ENCODE measurements at regions of chr16 and their contacts with region 1.

Region 1: DNA sequence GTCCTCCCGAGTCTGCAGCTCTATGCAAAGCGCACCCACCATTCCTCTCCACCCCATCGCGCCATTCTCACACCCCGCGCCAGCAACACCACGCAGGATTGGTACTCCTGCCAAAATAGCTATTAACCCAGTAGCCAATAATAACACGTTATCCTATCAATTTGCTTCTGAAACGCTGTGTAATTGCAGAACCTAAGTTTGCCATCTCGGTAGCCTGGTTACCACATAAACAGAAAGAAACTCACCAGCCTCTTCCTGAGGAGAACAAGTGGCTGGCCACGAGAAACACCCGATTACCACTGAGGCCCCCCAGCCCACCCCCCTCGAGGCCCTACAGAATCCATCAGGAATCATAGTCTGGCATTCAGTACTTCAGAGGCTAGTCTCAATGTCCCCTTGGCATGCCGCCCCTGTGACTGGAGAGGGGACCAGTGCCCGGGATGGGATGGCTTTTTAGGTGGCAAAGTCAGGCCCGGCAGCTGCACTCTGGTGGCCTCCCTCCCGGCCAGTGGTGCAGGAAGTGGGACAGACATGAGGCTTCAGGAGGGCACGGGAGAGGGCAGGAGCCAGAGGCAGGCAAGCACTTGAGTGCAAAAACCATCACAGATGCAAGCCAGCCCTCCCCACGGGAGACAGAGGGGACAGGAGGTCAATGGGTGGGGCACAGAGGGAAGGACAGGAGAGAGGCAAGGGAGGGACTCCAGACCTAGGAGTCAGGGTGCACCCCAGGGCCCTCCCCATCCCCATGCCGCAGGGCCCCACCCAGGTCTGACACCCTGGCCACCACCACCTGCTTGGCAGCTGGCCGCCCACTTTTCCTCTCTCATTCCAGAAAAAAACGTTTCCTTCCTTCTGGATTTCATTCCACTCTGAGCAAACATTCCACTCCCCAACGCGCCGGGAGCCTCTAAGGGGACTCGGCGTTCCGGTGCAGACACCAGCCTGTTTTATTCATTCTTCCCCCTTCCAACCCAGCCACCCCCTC is 192.5 kb downstream of the ZNF423 start:
- DNase-seq: peak; percentile 63
- H3K4me3 ChIP-seq: peak overlapping the region in 1 of 2 experiments; percentile 52; a peak in 2 of 4 replicates
- H3K27ac ChIP-seq: peak overlapping the region in 1 of 2 experiments; percentile 99; a peak in 3 of 4 replicates
- H3K4me1 ChIP-seq: peaks cover 0 to 73% of the 10 kb centered on the region in 2 experiments; a peak in 2 of 4 replicates
- H3K27me3 ChIP-seq: no peaks in the 10 kb centered on the region
- CTCF ChIP-seq: no peak
- EP300 ChIP-seq: no peak
- RAD21 ChIP-seq: no peak; the same call in 1 of the 2 replicates

Region 2: DNA sequence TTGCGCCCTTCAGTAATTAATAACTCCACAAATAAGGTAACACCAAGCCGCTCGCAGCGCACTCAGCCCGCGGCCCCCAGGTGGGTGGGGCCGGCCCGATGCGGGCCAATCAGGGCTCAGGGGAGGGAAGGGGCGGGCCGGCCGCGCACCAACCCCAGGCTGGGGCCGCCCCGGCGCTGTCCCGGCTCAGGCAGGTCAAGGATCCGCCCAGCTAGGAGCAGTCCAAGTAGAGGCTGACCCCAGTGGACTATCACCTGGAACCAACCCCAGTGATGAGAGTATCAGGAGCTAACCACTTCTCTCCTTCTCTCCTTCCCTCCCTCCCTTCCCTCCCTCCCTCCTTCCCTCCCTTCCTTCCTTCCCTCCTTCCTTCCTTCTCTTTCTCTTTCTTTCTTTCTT is 178.9 kb before region 1 on chr16:
- CTCF ChIA-PET with region 1: no interaction called
- POLR2A ChIA-PET with region 1: no interaction called
- DNase-seq: peak; percentile 95
- H3K4me3 ChIP-seq: no peak overlapping the region; a peak in 1 of 4 replicates
- H3K27ac ChIP-seq: no peak overlapping the region
- H3K4me1 ChIP-seq: peaks cover 0 to 3% of the 10 kb centered on the region in 2 experiments; a peak in 1 of 4 replicates
- H3K27me3 ChIP-seq: no peaks in the 10 kb centered on the region
- CTCF ChIP-seq: no peak
- EP300 ChIP-seq: no peak
- RAD21 ChIP-seq: no peak

Region 3: GRCh38 chr16:49639739-49640431 is 23.5 kb before region 1 on chr16:
- CTCF ChIA-PET with region 1: interaction called, 4 read pairs
- POLR2A ChIA-PET with region 1: interaction called, 10 read pairs
- DNase-seq: peak; percentile 81
- H3K4me3 ChIP-seq: no peak overlapping the region; a peak in 1 of 4 replicates
- H3K27ac ChIP-seq: peak overlapping the region; percentile 66 to 85
- H3K4me1 ChIP-seq: peaks cover 29 to 81% of the 10 kb centered on the region in 2 experiments
- H3K27me3 ChIP-seq: no peaks in the 10 kb centered on the region
- CTCF ChIP-seq: no peak
- EP300 ChIP-seq: peak in 1 of 2 experiments; percentile 69; a peak in 2 of 4 replicates
- RAD21 ChIP-seq: peak; percentile 11; the same call in 1 of the 2 replicates

Region 4: GRCh38 chr16:49698931-49699840 is 35.8 kb after region 1 on chr16:
- CTCF ChIA-PET with region 1: interaction called, 5 read pairs
- POLR2A ChIA-PET with region 1: interaction called, 10 read pairs
- DNase-seq: no peak
- H3K4me3 ChIP-seq: no peak overlapping the region
- H3K27ac ChIP-seq: peak overlapping the region; percentile 13 to 97; a peak in 3 of 4 replicates
- H3K4me1 ChIP-seq: peaks cover 10 to 77% of the 10 kb centered on the region in 2 experiments; a peak in 3 of 4 replicates
- H3K27me3 ChIP-seq: no peaks in the 10 kb centered on the region
- CTCF ChIP-seq: no peak
- EP300 ChIP-seq: no peak
- RAD21 ChIP-seq: no peak

Region 5: DNA sequence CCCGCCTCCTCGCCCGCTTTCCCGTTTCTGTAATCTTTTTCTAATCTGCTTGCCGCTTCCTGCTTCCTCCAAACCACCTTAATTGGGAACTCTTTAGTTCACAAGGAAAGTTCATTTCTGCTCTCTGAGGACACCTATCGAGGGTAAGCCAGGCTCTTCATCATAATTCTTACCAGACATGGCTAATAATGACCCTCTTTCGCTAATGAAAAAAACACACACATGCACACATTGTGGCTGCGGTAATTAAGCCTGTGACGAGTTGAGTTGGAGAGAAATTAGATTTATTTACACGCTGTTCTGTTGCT is 91.9 kb after region 1 on chr16:
- CTCF ChIA-PET with region 1: interaction called, 11 read pairs
- POLR2A ChIA-PET with region 1: interaction called, 3 read pairs
- DNase-seq: peak; percentile 69
- H3K4me3 ChIP-seq: no peak overlapping the region
- H3K27ac ChIP-seq: peak overlapping the region in 1 of 2 experiments; percentile 93; a peak in 2 of 4 replicates
- H3K4me1 ChIP-seq: peaks cover 9 to 52% of the 10 kb centered on the region in 2 experiments; a peak in 3 of 4 replicates
- H3K27me3 ChIP-seq: no peaks in the 10 kb centered on the region
- CTCF ChIP-seq: peak; percentile 49
- EP300 ChIP-seq: peak in 1 of 2 experiments; percentile 58; a peak in 1 of 4 replicates
- RAD21 ChIP-seq: peak; percentile 68